ENCODE measurements at regions of chr1 and their contacts with region 1.

Region 1: GRCh38 chr1:206479183-206480125 is 9.2 kb downstream of the IKBKE start:
- DNase-seq: peak; percentile 88
- H3K4me3 Mint-ChIP-seq: no peak overlapping the region
- H3K27ac Mint-ChIP-seq: peak overlapping the region; percentile 55
- H3K4me1 Mint-ChIP-seq: peaks cover 28% of the 10 kb centered on the region
- H3K27me3 Mint-ChIP-seq: no peaks in the 10 kb centered on the region

Region 2: GRCh38 chr1:206001476-206001888 is 478.0 kb before region 1 on chr1:
- intact Hi-C with region 1: loop called (anchors 5 kb)
- DNase-seq: no peak
- H3K4me3 Mint-ChIP-seq: no peak overlapping the region
- H3K27ac Mint-ChIP-seq: no peak overlapping the region
- H3K4me1 Mint-ChIP-seq: peaks cover 25% of the 10 kb centered on the region
- H3K27me3 Mint-ChIP-seq: peaks cover 13% of the 10 kb centered on the region

Region 3: DNA sequence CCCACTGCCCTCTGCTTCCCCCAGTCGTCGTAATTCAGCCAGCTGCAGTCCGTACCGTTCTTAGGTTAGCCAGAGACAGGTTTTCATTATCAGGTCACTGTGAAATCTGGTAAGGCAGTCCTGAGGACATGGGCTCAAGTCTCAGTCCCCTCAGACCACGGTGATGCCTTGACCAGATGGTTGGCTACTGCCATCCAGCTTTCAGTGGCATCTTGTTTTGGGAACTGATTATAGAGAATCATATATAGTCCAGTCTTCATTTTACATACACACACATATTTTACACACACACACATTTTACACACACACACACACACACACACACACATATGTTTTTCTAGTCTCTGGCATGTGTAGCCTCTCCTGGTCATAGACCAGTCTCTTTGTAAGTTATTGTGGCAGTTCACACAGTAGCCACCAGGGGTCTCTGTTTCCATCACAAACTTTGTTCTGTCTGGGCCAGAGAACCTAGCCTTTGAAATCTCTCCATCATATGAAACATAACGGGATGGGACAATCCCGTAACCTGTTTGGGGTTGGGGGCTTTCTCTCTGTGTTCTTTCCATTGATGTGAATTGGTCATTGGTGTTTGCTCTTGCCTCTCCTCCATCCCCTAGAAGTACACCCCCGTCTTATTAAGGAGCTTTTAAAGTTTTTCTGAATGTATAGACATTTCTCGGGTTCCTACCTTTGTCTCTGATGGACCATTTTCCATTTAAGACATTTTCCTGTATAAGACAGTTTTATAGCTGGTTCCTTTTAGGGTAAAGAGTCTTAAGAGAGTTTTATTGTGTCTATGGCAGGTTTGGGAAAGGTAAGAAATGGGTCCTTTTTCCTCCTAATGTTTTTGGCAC is 17.6 kb before region 1 on chr1:
- intact Hi-C with region 1: loop called (anchors 1 kb)
- DNase-seq: peak; percentile 94
- H3K4me3 Mint-ChIP-seq: no peak overlapping the region
- H3K27ac Mint-ChIP-seq: peak overlapping the region; percentile 5
- H3K4me1 Mint-ChIP-seq: peaks cover 44% of the 10 kb centered on the region
- H3K27me3 Mint-ChIP-seq: no peaks in the 10 kb centered on the region

Region 4: GRCh38 chr1:206583707-206584648 is 104.5 kb after region 1 on chr1:
- intact Hi-C with region 1: loop called (anchors 1 kb)
- DNase-seq: peak; percentile 94
- H3K4me3 Mint-ChIP-seq: peak overlapping the region; percentile 84
- H3K27ac Mint-ChIP-seq: peak overlapping the region; percentile 100
- H3K4me1 Mint-ChIP-seq: peaks cover 83% of the 10 kb centered on the region
- H3K27me3 Mint-ChIP-seq: no peaks in the 10 kb centered on the region

Region 5: GRCh38 chr1:206663832-206664652 is 184.6 kb after region 1 on chr1:
- intact Hi-C with region 1: loop called (anchors 5 kb)
- DNase-seq: peak; percentile 92
- H3K4me3 Mint-ChIP-seq: peak overlapping the region; percentile 57
- H3K27ac Mint-ChIP-seq: peak overlapping the region; percentile 39
- H3K4me1 Mint-ChIP-seq: peaks cover 34% of the 10 kb centered on the region
- H3K27me3 Mint-ChIP-seq: peaks cover 2% of the 10 kb centered on the region

Measured in activated CD4-positive, alpha-beta T cell treated with anti-CD3 and anti-CD28 coated beads, Interleukin-2, amount 10 ng/mL, durations not matched to agents 24 days and 14 days (primary cell).